GM12878 (cell line): ENCODE measurements at regions of chr5 and their contacts with region 1.

Region 1: GRCh38 chr5:157620776-157621175 is 31.5 kb downstream of the SOX30 start:
- DNase-seq: no peak
- ATAC-seq: no peak
- H3K4me3 ChIP-seq: no peak overlapping the region
- H3K27ac ChIP-seq: no peak overlapping the region
- H3K4me1 ChIP-seq: no peaks in the 10 kb centered on the region
- H3K27me3 ChIP-seq: no peaks in the 10 kb centered on the region
- CTCF ChIP-seq: no peak
- EP300 ChIP-seq: no peak
- POLR2A ChIP-seq: no peak
- RAD21 ChIP-seq: no peak

Region 2: GRCh38 chr5:157528036-157528632 is 92.6 kb before region 1 on chr5:
- CTCF ChIA-PET with region 1: no interaction called
- POLR2A ChIA-PET with region 1: no interaction called
- RAD21 ChIA-PET with region 1: no interaction called
- SMC1A ChIA-PET with region 1: no interaction called
- in situ Hi-C with region 1: no loop called
- intact Hi-C with region 1: no loop called
- DNase-seq: no peak
- ATAC-seq: no peak
- H3K4me3 ChIP-seq: no peak overlapping the region
- H3K27ac ChIP-seq: no peak overlapping the region
- H3K4me1 ChIP-seq: peaks cover 7% of the 10 kb centered on the region
- H3K27me3 ChIP-seq: no peaks in the 10 kb centered on the region
- CTCF ChIP-seq: no peak
- EP300 ChIP-seq: no peak
- POLR2A ChIP-seq: no peak
- RAD21 ChIP-seq: no peak

Region 3: GRCh38 chr5:157603333-157604190 is 17.2 kb before region 1 on chr5:
- CTCF ChIA-PET with region 1: interaction called, 3 read pairs
- POLR2A ChIA-PET with region 1: interaction called, 5 read pairs
- RAD21 ChIA-PET with region 1: no interaction called
- SMC1A ChIA-PET with region 1: interaction called, 142 read pairs
- in situ Hi-C with region 1: no loop called
- intact Hi-C with region 1: no loop called
- DNase-seq: no peak
- ATAC-seq: peak; percentile 62
- H3K4me3 ChIP-seq: no peak overlapping the region; the same call in 1 of the 2 replicates
- H3K27ac ChIP-seq: peak overlapping the region; percentile 49; the same call in 1 of the 2 replicates
- H3K4me1 ChIP-seq: peaks cover 63% of the 10 kb centered on the region
- H3K27me3 ChIP-seq: no peaks in the 10 kb centered on the region
- CTCF ChIP-seq: no peak
- EP300 ChIP-seq: peak; percentile 64 to 82; a peak in 3 of 4 replicates
- POLR2A ChIP-seq: no peak
- RAD21 ChIP-seq: 0 out of 2 replicates have a peak, but pooled peaks have one; percentile 1